OCI-LY7 (cell line): ENCODE measurements at regions of chr2 and their contacts with region 1.

Region 1: DNA sequence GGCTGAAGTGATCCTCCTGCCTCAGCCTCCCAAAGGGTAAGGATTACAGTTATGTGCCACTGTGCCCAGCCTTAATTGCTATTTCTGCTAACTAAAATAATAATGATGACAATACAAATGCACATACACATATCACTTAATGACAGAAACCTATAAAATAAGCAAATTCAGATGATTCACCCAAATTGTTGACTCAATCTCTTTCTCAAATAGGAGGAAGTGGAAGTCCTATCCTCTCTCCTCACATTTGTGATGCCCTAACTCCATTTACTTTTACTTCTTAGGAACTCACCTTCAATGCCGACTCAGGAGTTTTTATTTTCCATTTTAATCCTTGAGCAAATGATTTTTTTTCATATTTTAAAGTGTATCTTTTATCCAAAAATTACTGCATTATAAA is 24.5 kb upstream of the RAPH1 start:
- DNase-seq: no peak
- H3K4me3 ChIP-seq: no peak overlapping the region
- H3K27ac ChIP-seq: no peak overlapping the region
- H3K4me1 ChIP-seq: no peaks in the 10 kb centered on the region
- CTCF ChIP-seq: no peak

Region 2: DNA sequence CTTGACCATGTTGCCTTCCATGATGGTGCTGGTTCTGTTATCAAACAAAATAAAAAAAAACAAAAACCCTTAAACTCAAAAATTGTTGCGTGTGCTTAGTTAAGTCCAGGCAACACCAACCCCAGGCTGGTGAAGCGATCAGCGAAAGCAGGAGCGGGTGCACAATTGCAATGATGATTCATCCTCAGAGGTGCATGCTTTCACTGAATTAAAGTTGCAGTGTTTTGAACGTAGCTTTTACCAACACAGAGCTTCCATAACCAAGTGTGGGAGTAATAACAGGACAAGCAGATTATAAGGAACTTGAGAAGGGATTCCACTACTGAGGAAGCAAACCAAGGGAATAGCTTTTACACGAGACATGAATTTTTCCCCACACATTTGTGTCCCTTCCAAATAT is 15.2 kb after region 1 on chr2:
- CTCF ChIA-PET with region 1: no interaction called
- POLR2A ChIA-PET with region 1: interaction called, 13 read pairs
- intact Hi-C with region 1: no loop called
- DNase-seq: no peak
- H3K4me3 ChIP-seq: no peak overlapping the region
- H3K27ac ChIP-seq: no peak overlapping the region
- H3K4me1 ChIP-seq: peaks cover 9% of the 10 kb centered on the region
- CTCF ChIP-seq: no peak